A673 (cell line): ENCODE measurements at regions of chr11 and their contacts with region 1.

Region 1: DNA sequence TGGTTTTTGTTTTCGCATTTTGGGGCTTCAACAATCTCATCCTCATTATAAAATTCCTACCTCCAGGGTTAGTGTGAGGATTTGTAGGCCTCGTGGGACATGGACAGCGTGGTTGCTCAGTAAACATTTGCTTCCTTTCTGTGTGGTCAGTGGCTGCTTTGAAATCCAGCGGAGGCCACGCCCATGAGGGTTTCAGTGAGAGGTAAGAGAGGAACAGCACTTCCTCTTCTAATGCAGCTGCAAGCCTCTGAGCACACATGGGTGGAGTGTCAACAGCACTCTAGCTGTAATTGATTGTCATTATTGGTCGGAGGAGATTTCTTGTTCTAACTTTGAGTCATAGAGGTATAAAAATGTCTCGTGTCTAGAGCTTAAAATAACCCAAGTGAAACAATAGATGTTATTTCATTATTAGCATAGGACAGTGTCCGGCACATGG is 6.0 kb upstream of the ARHGAP42 start:
- DNase-seq: no peak
- H3K4me3 ChIP-seq: no peak overlapping the region
- H3K27ac ChIP-seq: no peak overlapping the region
- H3K4me1 ChIP-seq: no peaks in the 10 kb centered on the region
- H3K27me3 ChIP-seq: no peaks in the 10 kb centered on the region
- CTCF ChIP-seq: no peak

Region 2: GRCh38 chr11:100612766-100613165 is 68.3 kb before region 1 on chr11:
- CTCF ChIA-PET with region 1: no interaction called
- POLR2A ChIA-PET with region 1: no interaction called
- intact Hi-C with region 1: no loop called
- DNase-seq: no peak
- H3K4me3 ChIP-seq: no peak overlapping the region
- H3K27ac ChIP-seq: no peak overlapping the region
- H3K4me1 ChIP-seq: no peaks in the 10 kb centered on the region
- H3K27me3 ChIP-seq: no peaks in the 10 kb centered on the region
- CTCF ChIP-seq: no peak

Region 3: DNA sequence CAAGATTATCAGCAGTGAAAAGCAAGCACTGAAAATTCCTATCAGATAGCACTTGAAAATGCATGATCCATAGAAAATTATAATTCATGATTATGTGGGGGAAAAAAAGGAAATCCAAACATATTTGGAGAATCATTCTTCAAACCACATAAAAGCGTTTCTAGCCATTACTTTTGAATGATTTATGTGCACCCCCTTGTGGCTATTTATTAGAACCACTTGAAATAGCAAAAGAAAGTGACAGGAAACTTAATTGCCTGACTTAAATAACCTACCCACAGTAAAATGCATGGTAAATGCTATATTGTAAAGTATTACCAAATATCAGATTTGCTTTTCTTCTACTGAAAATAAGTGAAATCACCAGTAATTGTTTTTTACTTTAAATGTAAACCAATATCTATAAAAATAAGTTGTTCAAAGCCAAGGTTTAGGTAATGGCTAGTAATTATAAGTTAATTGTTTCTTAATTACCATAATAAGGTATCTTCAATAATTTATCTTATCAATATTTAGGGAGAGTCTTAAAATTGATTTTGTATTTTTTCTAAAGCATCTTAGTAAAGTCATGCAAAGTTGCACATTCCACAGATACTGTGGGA is 174.5 kb after region 1 on chr11:
- CTCF ChIA-PET with region 1: interaction called, 4 read pairs
- POLR2A ChIA-PET with region 1: no interaction called
- intact Hi-C with region 1: loop called (anchors 1 kb)
- DNase-seq: peak; percentile 85
- H3K4me3 ChIP-seq: no peak overlapping the region
- H3K27ac ChIP-seq: no peak overlapping the region
- H3K4me1 ChIP-seq: peaks cover 10% of the 10 kb centered on the region
- H3K27me3 ChIP-seq: no peaks in the 10 kb centered on the region
- CTCF ChIP-seq: peak; percentile 69

Region 4: GRCh38 chr11:101014600-101015285 is 333.7 kb after region 1 on chr11:
- CTCF ChIA-PET with region 1: no interaction called
- POLR2A ChIA-PET with region 1: interaction called, 11 read pairs
- intact Hi-C with region 1: no loop called
- DNase-seq: no peak
- H3K4me3 ChIP-seq: no peak overlapping the region
- H3K27ac ChIP-seq: no peak overlapping the region
- H3K4me1 ChIP-seq: no peaks in the 10 kb centered on the region
- H3K27me3 ChIP-seq: no peaks in the 10 kb centered on the region
- CTCF ChIP-seq: no peak